GM18951 (cell line): ENCODE measurements at regions of chr12 and their contacts with region 1.

Region 1: DNA sequence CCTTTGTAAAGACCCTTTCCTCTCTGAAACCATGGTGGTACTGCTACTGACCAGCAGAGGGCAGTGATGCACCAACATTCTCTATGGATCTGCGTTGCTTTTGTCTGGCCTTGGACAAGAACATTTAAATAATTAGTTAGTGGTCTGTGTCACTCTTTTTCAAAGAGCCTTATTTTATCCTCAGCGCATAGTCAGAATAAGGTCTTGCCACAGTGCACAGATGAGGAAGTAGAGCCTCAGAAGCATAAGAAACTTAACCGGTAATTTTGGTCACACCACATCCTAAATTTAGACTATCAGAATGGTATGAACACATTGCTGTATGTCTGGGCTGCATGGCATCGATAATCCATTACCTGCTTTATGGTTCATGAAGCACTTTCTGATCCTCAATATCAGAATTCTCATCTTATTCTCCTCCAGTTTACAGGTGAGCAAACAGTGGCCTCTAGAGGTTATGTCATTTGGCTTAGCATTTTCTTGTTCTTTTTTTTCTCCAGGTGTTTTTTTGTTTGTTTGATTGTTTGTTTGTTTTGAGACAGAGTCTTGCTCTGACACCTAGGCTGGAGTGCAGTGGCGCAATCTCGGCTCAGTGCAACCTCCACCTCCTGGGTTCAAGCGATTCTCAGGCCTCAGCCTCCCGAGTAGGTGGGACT is 23.7 kb upstream of the IFT81 start:
- POLR2A ChIP-seq: no peak

Region 2: DNA sequence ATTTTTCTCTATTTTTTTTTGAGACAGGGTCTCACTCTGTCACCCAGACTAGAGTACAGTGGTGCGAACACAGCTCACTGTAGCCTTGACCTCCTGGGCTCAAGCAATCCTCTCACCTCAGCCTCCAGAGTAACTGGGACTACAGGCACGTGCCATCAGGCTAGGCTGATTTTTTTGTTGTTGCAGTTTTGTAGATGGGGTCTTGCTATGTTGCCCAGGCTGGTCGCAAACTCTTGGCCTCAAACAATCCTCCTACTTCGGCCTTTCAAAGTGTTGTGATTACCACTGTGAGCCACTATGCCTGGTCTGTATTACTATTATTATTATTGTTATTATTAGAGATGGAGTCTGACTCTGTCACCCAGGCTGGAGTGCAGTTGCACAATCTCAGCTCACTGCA is 127.6 kb before region 1 on chr12:
- in situ Hi-C with region 1: no loop called
- POLR2A ChIP-seq: no peak

Region 3: GRCh38 chr12:110224379-110225304 is 124.2 kb after region 1 on chr12:
- in situ Hi-C with region 1: loop called (anchors 25 kb)
- POLR2A ChIP-seq: no peak